ENCODE measurements at regions of chr2 and their contacts with region 1.

Region 1: GRCh38 chr2:165203689-165204559 is at the start of gene SCN3A:
- DNase-seq: peak; percentile 7
- H3K4me3 ChIP-seq: no peak within 1 kb of the TSS
- H3K27ac ChIP-seq: no peak within 1 kb of the TSS
- H3K27me3 ChIP-seq: no peaks in the 10 kb centered on the region
- CTCF ChIP-seq: peak; percentile 80
- polyA plus RNA-seq, gene SCN3A: 0.11 and 0.17 TPM in 2 replicates

Region 2: GRCh38 chr2:164992818-164993217 is 211.1 kb before region 1 on chr2:
- CTCF ChIA-PET with region 1: interaction called, 126 read pairs
- POLR2A ChIA-PET with region 1: no interaction called
- DNase-seq: peak; percentile 61
- H3K4me3 ChIP-seq: no peak overlapping the region
- H3K27ac ChIP-seq: no peak overlapping the region
- H3K27me3 ChIP-seq: no peaks in the 10 kb centered on the region
- CTCF ChIP-seq: peak; percentile 49

Region 3: DNA sequence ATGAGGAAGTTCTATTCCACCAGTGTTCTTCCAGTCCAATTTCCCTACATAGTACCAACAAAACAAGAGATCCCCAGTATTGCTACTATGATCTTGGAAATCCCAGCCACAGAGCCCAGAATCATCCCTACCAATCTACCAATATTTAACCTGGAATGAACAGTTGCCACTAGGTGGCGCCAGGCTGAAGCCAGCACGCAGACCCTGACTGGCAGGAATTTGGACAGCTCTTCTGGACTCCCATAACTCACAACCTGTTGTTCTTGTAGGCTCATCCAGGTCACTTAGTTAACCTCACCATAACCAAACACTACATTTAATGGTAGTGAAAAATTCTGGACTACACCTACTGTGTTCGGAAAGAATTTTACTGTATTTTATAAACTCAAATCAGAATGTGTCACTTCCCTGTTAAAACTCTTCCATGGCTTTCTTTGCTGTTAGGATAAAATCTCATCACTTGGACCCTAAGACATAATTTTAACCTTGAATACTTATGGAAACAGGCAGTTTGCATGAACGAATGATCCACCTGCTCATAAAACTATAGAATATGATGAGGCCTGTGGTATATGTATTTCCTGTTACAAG is 188.8 kb before region 1 on chr2:
- CTCF ChIA-PET with region 1: interaction called, 417 read pairs
- POLR2A ChIA-PET with region 1: interaction called, 10 read pairs
- DNase-seq: peak; percentile 34
- H3K4me3 ChIP-seq: no peak overlapping the region
- H3K27ac ChIP-seq: no peak overlapping the region
- H3K27me3 ChIP-seq: no peaks in the 10 kb centered on the region
- CTCF ChIP-seq: peak; percentile 96

Region 4: GRCh38 chr2:165161510-165161909 is 42.4 kb before region 1 on chr2:
- CTCF ChIA-PET with region 1: interaction called, 16 read pairs
- POLR2A ChIA-PET with region 1: no interaction called
- DNase-seq: peak; percentile 33
- H3K4me3 ChIP-seq: no peak overlapping the region
- H3K27ac ChIP-seq: no peak overlapping the region
- H3K27me3 ChIP-seq: no peaks in the 10 kb centered on the region
- CTCF ChIP-seq: no peak

Region 5: DNA sequence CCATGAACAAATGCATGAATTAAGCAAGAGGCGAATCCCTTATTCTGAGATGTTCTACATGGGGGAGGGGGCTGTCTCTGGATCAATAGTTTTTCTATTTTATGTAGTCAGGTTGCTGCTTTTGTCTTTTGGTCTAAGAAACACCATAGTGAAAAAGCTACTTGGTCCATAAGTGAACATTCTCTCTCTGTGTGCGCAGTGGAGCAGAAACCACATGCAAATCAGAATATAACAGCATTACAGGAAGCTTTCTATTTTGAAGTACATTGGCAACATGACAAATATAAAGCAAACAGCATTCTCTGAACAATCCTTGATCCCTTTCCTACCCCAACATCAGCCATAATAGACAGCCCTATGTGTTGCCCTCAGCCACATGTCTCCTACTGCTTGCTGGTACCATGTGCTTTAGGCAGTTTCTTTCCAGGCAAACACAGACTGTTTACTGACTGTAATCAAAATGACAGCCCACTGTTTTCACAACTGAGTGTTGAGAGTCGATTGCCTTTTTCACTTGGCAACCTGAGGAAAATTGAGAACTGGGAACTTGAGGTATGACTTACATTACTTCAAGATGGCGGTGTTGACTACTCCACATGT is 10.6 kb before region 1 on chr2:
- CTCF ChIA-PET with region 1: interaction called, 17 read pairs
- POLR2A ChIA-PET with region 1: no interaction called
- DNase-seq: no peak
- H3K4me3 ChIP-seq: no peak overlapping the region
- H3K27ac ChIP-seq: no peak overlapping the region
- H3K27me3 ChIP-seq: no peaks in the 10 kb centered on the region
- CTCF ChIP-seq: no peak

Region 6: GRCh38 chr2:165248238-165248637 is 44.3 kb after region 1 on chr2:
- CTCF ChIA-PET with region 1: interaction called, 12 read pairs
- POLR2A ChIA-PET with region 1: no interaction called
- DNase-seq: no peak
- H3K4me3 ChIP-seq: no peak overlapping the region
- H3K27ac ChIP-seq: no peak overlapping the region
- H3K27me3 ChIP-seq: no peaks in the 10 kb centered on the region
- CTCF ChIP-seq: no peak